CD8-positive, alpha-beta T cell (primary cell): ENCODE measurements at regions of chr4 and their contacts with region 1.

Region 1: DNA sequence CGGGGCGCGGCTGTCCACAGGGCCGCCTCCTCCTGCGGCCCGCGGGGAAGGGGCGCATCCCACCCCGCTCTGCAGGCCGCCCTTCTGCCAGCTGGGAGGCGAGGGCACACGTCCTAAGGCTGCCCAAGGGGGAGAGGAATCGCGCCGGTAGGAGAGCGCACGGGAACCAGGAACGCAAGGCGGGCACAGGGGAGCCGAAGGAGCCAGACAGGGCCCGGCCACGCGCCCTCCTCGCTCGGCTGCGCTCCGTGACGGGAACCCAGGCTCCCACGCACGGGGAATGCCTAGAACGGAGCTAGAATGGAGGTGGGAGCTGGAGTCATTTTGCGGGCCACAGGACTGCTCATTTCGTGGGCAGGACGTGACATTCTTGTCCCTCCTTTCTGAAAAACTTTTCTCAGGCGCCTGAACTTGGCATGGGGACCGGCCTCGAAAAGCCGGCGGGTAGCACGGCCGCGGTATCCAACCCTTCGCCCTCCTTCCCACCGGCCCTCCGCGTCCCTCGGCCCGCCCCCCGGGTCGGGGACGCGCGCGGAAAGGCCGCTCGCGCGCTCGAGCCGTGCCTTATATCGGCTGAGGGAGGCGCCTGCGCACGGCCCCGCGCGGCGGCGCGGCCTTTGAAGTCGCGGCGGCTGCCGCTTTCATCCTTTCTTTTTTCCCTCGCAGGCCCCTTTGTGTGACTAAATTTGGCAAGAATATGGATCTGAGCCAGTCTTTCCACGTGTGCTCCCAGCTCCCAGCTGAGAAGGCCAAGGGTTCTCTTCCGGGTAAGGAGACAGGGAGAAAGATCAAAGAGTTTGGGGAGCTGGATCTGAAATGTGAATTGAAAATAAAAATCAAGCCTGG is 4.2 kb upstream of the LEF1 start:
- DNase-seq: peak; percentile 39 to 85 (median 72)
- ATAC-seq: peak; percentile 46
- H3K4me3 ChIP-seq: peak overlapping the region; percentile 71 to 82
- H3K4me3 Mint-ChIP-seq: peak overlapping the region; percentile 92
- H3K27ac ChIP-seq: peak overlapping the region; percentile 48 to 71
- H3K27ac Mint-ChIP-seq: peak overlapping the region; percentile 93
- H3K4me1 ChIP-seq: peaks cover 39% of the 10 kb centered on the region
- H3K4me1 Mint-ChIP-seq: peaks cover 58% of the 10 kb centered on the region
- H3K27me3 ChIP-seq: peaks cover 0 to 26% of the 10 kb centered on the region in 2 experiments
- H3K27me3 Mint-ChIP-seq: peaks cover 3% of the 10 kb centered on the region
- CTCF ChIP-seq: no peak

Region 2: DNA sequence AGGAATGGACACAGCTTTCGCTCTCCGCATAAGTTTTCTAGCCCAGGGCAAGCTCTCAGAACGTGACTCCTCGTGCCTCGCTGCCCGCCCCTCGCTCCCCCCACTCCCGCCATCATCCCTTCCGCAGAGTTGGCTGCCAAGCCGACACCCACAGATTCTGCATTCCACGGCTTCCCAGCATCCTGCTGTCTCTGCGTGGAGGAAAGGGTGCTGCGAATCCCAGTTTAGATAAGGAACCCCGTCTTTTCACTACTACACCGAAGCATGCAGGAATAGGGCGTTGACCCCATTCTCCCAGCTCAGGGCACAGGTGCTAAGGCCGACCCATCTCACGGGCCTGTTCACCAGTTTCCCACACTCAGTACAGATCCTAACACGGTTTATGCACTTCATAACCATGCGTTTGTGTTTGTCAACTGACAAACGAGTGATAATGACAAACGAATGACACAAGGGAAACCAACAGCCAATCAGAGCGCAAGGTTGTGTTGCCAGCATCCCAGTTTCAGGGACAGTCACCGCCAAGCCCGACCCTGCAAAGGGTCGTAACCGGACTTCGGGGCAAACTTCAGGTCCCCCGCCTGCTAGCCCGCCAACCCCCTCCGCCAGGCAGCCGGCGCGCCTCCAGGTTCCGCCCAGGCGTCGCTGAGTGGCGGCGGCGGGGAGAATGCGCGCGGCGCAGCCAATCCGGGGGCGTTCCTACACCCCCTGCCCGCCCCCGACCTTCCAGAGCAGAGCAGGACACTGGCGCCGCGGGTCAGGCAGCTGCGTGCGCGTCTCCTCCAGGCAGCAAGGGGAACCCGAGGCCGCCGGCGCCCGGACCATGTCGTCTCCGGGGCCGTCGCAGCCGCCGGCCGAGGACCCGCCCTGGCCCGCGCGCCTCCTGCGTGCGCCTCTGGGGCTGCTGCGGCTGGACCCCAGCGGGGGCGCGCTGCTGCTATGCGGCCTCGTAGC is 241.9 kb before region 1 on chr4 and contains the start of gene CYP2U1:
- CTCF ChIA-PET with region 1: no interaction called
- POLR2A ChIA-PET with region 1: no interaction called
- intact Hi-C with region 1: loop called in 1 of 2 experiments (anchors 5 kb)
- DNase-seq: peak; percentile 48 to 89 (median 80)
- ATAC-seq: peak; percentile 92
- H3K4me3 ChIP-seq: peak within 1 kb of the TSS; percentile 61 to 86
- H3K4me3 Mint-ChIP-seq: peak within 1 kb of the TSS; percentile 95
- H3K27ac ChIP-seq: peak within 1 kb of the TSS; percentile 48 to 55
- H3K27ac Mint-ChIP-seq: peak within 1 kb of the TSS; percentile 92
- H3K4me1 ChIP-seq: peaks cover 8% of the 10 kb centered on the region
- H3K4me1 Mint-ChIP-seq: peaks cover 35% of the 10 kb centered on the region
- H3K27me3 ChIP-seq: no peaks in the 10 kb centered on the region
- H3K27me3 Mint-ChIP-seq: no peaks in the 10 kb centered on the region
- CTCF ChIP-seq: no peak
- total RNA-seq, gene CYP2U1: 3.4 to 3.6 TPM

Region 3: DNA sequence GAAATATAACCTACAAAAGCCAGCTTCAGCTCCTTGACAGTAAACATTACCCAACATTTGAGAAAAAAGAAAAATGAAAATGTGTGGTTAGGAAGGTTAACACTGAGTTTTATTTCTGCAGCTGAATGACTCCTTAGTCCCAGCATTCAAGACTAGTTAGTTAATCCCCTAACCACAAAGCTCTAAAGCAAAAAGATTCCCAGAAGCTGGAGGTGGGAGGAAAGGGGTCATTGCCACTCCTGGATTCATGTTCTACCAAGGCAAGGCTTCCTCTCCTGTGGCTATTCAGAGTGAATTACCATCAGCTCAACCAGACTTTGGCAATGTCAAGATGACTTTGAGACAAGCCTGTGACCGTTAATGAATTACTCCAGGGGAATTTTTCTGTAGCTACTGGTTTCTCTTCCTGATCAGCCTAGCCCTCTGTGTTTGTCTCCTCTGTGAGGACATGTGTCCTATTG is 119.7 kb before region 1 on chr4:
- CTCF ChIA-PET with region 1: interaction called, 3 read pairs
- POLR2A ChIA-PET with region 1: no interaction called
- intact Hi-C with region 1: loop called in 1 of 2 experiments (anchors 5 kb)
- DNase-seq: no peak
- ATAC-seq: no peak
- H3K4me3 ChIP-seq: no peak overlapping the region
- H3K4me3 Mint-ChIP-seq: peak overlapping the region; percentile 49
- H3K27ac ChIP-seq: peak overlapping the region; percentile 1 to 35
- H3K27ac Mint-ChIP-seq: peak overlapping the region; percentile 95
- H3K4me1 ChIP-seq: peaks cover 96% of the 10 kb centered on the region
- H3K4me1 Mint-ChIP-seq: peaks cover 91% of the 10 kb centered on the region
- H3K27me3 ChIP-seq: no peaks in the 10 kb centered on the region
- H3K27me3 Mint-ChIP-seq: no peaks in the 10 kb centered on the region
- CTCF ChIP-seq: no peak

Region 4: GRCh38 chr4:108155373-108155772 is 17.6 kb before region 1 on chr4:
- CTCF ChIA-PET with region 1: interaction called, 3 read pairs
- POLR2A ChIA-PET with region 1: interaction called, 12 read pairs
- intact Hi-C with region 1: loop called in 1 of 2 experiments (anchors 2 kb)
- DNase-seq: peak in 5 of 9 experiments; percentile 43 to 81 (median 58)
- ATAC-seq: peak; percentile 66
- H3K4me3 ChIP-seq: peak overlapping the region in 1 of 2 experiments; percentile 29
- H3K4me3 Mint-ChIP-seq: peak overlapping the region; percentile 66
- H3K27ac ChIP-seq: peak overlapping the region in 1 of 2 experiments; percentile 21
- H3K27ac Mint-ChIP-seq: peak overlapping the region; percentile 88
- H3K4me1 ChIP-seq: peaks cover 85% of the 10 kb centered on the region
- H3K4me1 Mint-ChIP-seq: peaks cover 84% of the 10 kb centered on the region
- H3K27me3 ChIP-seq: peaks cover 0 to 4% of the 10 kb centered on the region in 2 experiments
- H3K27me3 Mint-ChIP-seq: no peaks in the 10 kb centered on the region
- CTCF ChIP-seq: peak; percentile 35

Region 5: DNA sequence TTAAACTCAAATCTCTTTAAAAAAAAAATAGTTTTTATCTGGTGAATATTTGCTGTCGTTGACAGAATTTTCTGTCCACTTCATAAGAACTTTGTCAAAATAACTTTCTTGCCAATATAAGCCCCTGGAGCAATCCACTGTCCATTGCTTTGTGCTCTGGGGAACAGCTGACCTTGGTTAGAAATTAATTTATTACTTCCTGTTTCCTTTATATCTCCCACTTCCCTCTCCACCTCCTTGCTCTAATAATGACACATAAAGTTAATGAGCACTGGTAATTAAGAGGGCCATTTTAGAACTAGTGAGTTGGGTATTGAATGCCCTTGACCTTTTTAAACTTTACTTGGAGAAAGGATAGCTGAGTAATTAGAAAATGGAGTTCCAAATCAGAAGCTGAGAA is 147.1 kb after region 1 on chr4:
- CTCF ChIA-PET with region 1: no interaction called
- POLR2A ChIA-PET with region 1: no interaction called
- intact Hi-C with region 1: no loop called
- DNase-seq: no peak
- ATAC-seq: no peak
- H3K4me3 ChIP-seq: no peak overlapping the region
- H3K4me3 Mint-ChIP-seq: no peak overlapping the region
- H3K27ac ChIP-seq: no peak overlapping the region
- H3K27ac Mint-ChIP-seq: no peak overlapping the region
- H3K4me1 ChIP-seq: no peaks in the 10 kb centered on the region
- H3K4me1 Mint-ChIP-seq: peaks cover 13% of the 10 kb centered on the region
- H3K27me3 ChIP-seq: no peaks in the 10 kb centered on the region
- H3K27me3 Mint-ChIP-seq: no peaks in the 10 kb centered on the region
- CTCF ChIP-seq: no peak

Region 6: GRCh38 chr4:108355186-108355901 is 182.4 kb after region 1 on chr4:
- CTCF ChIA-PET with region 1: interaction called, 4 read pairs
- POLR2A ChIA-PET with region 1: interaction called, 5 read pairs
- intact Hi-C with region 1: loop called in 1 of 2 experiments (anchors 5 kb)
- DNase-seq: peak in 6 of 9 experiments; percentile 22 to 85 (median 41)
- ATAC-seq: peak; percentile 87
- H3K4me3 ChIP-seq: peak overlapping the region in 1 of 2 experiments; percentile 10
- H3K4me3 Mint-ChIP-seq: peak overlapping the region; percentile 55
- H3K27ac ChIP-seq: peak overlapping the region; percentile 51 to 54
- H3K27ac Mint-ChIP-seq: peak overlapping the region; percentile 91
- H3K4me1 ChIP-seq: peaks cover 47% of the 10 kb centered on the region
- H3K4me1 Mint-ChIP-seq: peaks cover 66% of the 10 kb centered on the region
- H3K27me3 ChIP-seq: peaks cover 0 to 3% of the 10 kb centered on the region in 2 experiments
- H3K27me3 Mint-ChIP-seq: no peaks in the 10 kb centered on the region
- CTCF ChIP-seq: no peak

Region 7: DNA sequence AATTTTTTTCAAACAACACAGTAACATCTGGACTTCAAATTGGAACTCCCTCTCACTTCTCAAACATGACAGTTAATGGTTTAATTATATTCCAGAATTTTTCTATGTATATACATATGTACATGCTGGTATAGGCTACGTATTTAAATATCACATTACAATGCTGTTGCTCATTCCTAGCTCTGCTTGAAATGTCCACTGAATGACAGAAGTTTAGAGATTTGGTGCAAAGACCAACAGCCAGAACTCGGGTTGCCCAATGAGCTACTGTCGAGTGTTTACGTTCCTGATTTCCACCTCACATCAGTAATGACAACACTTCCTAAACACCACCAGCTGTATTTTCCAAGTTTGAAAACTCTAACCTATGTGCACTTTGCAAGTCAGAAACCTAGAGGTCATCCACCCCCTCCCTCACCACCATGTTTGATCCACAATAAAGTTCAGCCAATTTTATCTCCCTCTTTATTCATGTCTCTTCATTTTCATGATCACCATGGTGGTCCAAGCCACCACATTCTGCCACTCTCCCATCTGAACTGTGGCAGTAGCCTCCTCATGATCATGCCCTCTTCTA is 398.1 kb after region 1 on chr4:
- CTCF ChIA-PET with region 1: interaction called, 9 read pairs
- POLR2A ChIA-PET with region 1: interaction called, 3 read pairs
- intact Hi-C with region 1: loop called (anchors 5 kb)
- DNase-seq: no peak
- ATAC-seq: no peak
- H3K4me3 ChIP-seq: no peak overlapping the region
- H3K4me3 Mint-ChIP-seq: no peak overlapping the region
- H3K27ac ChIP-seq: no peak overlapping the region
- H3K27ac Mint-ChIP-seq: no peak overlapping the region
- H3K4me1 ChIP-seq: peaks cover 26% of the 10 kb centered on the region
- H3K4me1 Mint-ChIP-seq: peaks cover 31% of the 10 kb centered on the region
- H3K27me3 ChIP-seq: peaks cover 0 to 2% of the 10 kb centered on the region in 2 experiments
- H3K27me3 Mint-ChIP-seq: no peaks in the 10 kb centered on the region
- CTCF ChIP-seq: no peak